Left cardiac atrium (tissue), 4 donors: ENCODE measurements at regions of chr14 and their contacts with region 1.

Region 1: DNA sequence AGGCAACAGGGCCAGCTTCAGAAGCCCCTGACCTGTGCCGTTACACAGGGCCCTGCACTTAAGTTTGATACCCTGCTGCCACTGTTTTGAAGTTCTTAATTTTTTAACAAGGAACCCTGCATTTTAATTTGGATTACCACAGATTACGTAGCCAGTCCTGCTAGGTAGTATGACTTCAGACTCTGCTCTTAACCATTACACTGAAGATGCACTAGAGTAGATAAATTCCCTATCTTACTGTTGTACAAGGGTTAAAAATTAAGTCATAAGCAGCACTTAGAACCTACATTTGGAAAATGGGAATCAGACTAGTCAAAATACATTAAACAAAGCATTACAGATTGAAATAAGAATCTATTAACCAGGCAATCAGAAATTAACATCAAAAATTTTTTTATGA is 2.3 kb downstream of the GNPNAT1 start:
- DNase-seq: no peak
- ATAC-seq: no peak

Region 2: DNA sequence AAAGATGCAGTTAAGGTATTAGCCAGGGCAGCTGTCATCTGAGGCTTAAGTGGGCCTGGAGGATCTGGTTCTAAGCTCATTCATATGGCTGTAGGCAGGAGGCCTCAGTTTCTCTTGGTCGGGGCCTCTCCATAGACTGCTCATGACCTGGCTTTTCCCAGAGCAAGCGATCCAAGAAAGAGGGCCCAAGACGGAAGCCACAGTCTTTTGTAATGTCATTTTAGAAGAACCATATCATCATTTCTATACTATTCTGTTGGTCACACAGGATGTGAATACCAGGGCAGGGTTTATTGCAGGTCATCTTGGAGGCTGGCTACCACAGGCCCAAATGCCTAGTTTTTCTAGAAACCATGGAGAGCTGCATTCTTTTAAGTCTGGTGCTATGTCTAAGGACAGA is 881.0 kb before region 1 on chr14:
- intact Hi-C with region 1: no loop called
- DNase-seq: no peak
- ATAC-seq: no peak

Region 3: GRCh38 chr14:52650774-52651173 is 138.3 kb before region 1 on chr14:
- intact Hi-C with region 1: no loop called
- DNase-seq: no peak
- ATAC-seq: no peak

Region 4: GRCh38 chr14:52729925-52730667 is 59.0 kb before region 1 on chr14 and contains the start of gene STYX:
- intact Hi-C with region 1: loop called in 1 of 2 experiments (anchors 10 kb)
- DNase-seq: peak; percentile 99
- ATAC-seq: peak; percentile 99
- total RNA-seq, gene STYX: 11.5 to 12.5 TPM

Region 5: DNA sequence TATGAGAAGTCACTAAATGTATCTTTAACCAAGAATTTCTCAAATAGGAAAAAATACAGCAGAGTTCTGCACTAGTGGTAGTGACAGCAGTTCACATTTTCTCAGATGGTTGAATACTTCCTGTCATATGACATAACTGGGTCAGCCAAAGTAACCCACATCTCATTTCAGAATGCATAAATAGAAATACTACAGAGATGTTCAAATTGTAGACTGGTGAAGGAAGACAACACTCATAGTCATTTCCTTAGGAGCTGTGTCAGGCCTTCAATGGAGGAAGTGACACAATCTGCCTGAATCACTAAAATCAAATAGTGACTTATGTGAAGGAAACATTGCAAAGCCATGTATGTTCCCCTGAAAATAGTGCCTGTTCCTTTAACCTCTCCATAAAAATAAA is 129.4 kb after region 1 on chr14:
- intact Hi-C with region 1: no loop called
- DNase-seq: no peak
- ATAC-seq: peak; percentile 76 to 79